ENCODE measurements at regions of chr17 and their contacts with region 1.

Region 1: DNA sequence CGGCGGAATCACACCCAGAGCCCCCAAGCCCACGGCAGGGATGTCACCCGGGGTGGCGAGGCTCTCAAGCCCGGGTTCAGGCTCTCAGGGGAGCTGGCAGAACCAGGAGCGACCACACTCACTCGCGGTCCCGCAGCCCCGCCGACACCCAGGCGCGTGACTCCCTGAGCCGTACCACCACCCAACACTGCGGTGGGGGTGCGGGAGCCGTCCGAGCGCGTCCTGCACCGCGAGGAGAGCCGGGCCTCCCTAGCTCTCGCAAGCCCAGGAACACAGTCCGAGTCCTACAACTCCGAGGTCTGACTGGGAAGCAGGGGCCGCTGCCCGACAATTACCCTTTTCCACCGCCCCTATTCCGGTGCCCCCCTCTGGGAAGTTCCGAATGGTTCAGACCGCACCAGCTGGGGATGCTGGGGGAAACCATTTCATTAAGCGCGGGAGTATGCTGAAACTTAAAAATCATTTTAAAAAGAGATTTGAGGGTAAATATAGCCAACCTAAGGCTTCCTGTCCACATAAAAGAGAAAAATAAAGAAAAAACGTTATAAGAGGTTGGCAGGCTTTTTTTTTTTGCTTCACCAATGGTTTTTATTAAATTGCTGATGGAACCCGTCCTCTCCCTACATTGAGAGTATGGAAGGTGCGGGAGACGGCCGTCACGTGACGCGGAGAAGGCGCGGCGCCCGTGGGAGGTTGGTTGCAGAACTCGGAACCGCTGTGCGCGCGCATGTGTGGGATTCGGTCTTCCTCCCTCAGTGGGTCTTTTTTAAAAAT is at the start of gene FLCN:
- DNase-seq: peak; percentile 84
- H3K4me3 Mint-ChIP-seq: peak within 1 kb of the TSS; percentile 94
- H3K27ac Mint-ChIP-seq: peak within 1 kb of the TSS; percentile 99
- H3K4me1 Mint-ChIP-seq: peaks cover 25% of the 10 kb centered on the region
- H3K27me3 Mint-ChIP-seq: peaks cover 4% of the 10 kb centered on the region
- total RNA-seq, gene FLCN: 35.5 and 36.4 TPM in 2 replicates

Region 2: GRCh38 chr17:17001874-17002520 is 235.2 kb before region 1 on chr17:
- intact Hi-C with region 1: loop called (anchors 1 kb)
- DNase-seq: peak; percentile 66
- H3K4me3 Mint-ChIP-seq: no peak overlapping the region
- H3K27ac Mint-ChIP-seq: no peak overlapping the region
- H3K4me1 Mint-ChIP-seq: no peaks in the 10 kb centered on the region
- H3K27me3 Mint-ChIP-seq: peaks cover 4% of the 10 kb centered on the region

Region 3: GRCh38 chr17:17067257-17067656 is 170.0 kb before region 1 on chr17:
- intact Hi-C with region 1: no loop called
- DNase-seq: no peak
- H3K4me3 Mint-ChIP-seq: no peak overlapping the region
- H3K27ac Mint-ChIP-seq: no peak overlapping the region
- H3K4me1 Mint-ChIP-seq: peaks cover 48% of the 10 kb centered on the region
- H3K27me3 Mint-ChIP-seq: no peaks in the 10 kb centered on the region

Region 4: GRCh38 chr17:17126131-17127110 is 110.8 kb before region 1 on chr17:
- intact Hi-C with region 1: no loop called
- DNase-seq: no peak
- H3K4me3 Mint-ChIP-seq: no peak overlapping the region
- H3K27ac Mint-ChIP-seq: no peak overlapping the region
- H3K4me1 Mint-ChIP-seq: peaks cover 42% of the 10 kb centered on the region
- H3K27me3 Mint-ChIP-seq: no peaks in the 10 kb centered on the region

Region 5: DNA sequence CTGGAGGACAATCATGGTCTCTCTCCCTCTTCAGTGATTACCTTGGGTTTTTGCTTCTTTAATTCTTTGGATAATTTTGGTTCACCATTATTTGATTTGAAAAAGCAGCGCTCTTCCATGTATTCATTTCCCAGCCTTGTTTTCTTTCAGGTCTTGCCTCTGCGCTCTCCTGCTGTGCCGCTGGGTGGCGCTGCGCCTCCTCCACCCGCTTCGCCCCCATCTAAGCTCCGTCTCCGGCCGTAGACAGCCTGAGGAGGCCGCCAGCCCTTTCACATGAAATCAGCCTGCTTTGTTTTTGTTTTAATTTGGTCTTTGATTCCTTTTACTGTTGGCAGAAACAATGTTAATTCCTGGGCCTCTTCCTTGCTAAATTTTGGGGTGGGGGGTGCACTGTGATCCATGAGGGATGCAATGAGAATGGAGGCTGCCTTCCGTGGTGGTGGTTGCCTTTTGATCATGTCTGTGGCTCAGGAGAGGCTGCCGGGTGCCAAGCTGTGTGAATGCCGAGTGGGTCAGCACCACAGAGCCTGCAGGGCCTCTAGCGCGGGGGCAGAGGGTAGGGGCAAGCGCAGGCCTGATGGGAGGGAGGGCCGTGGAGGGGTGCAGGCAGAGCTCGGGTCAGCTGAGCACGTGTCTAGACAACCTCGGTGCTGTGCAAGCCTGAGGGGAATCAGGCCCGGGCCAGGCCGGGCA is 95.2 kb before region 1 on chr17:
- intact Hi-C with region 1: loop called (anchors 2 kb)
- DNase-seq: peak; percentile 30
- H3K4me3 Mint-ChIP-seq: no peak overlapping the region
- H3K27ac Mint-ChIP-seq: peak overlapping the region; percentile 56
- H3K4me1 Mint-ChIP-seq: peaks cover under 1% of the 10 kb centered on the region
- H3K27me3 Mint-ChIP-seq: no peaks in the 10 kb centered on the region

Region 6: DNA sequence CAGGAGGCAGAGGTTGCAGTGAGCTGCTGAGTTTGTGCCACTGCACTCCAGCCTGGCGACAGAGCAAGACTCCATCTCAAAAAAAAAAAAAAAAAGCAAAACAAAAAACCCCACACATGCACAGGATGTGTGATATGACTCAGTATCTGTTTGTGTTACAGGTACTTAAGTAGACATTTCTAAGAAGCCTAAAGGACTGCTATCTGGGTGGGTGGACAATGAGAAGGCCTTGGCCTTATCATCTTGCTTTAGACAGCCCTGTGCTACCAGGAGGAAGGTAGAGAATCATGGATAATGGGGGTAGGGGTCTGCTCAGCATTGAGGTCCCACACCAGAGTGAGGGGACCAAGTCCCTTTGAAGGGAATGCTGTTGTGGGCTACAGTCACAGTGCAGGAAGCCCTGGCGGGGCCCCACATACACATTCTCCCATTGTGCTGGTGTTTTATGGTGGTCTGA is 57.8 kb before region 1 on chr17:
- intact Hi-C with region 1: loop called (anchors 1 kb)
- DNase-seq: peak; percentile 39
- H3K4me3 Mint-ChIP-seq: peak overlapping the region; percentile 84
- H3K27ac Mint-ChIP-seq: peak overlapping the region; percentile 97
- H3K4me1 Mint-ChIP-seq: peaks cover 76% of the 10 kb centered on the region
- H3K27me3 Mint-ChIP-seq: no peaks in the 10 kb centered on the region

Region 7: DNA sequence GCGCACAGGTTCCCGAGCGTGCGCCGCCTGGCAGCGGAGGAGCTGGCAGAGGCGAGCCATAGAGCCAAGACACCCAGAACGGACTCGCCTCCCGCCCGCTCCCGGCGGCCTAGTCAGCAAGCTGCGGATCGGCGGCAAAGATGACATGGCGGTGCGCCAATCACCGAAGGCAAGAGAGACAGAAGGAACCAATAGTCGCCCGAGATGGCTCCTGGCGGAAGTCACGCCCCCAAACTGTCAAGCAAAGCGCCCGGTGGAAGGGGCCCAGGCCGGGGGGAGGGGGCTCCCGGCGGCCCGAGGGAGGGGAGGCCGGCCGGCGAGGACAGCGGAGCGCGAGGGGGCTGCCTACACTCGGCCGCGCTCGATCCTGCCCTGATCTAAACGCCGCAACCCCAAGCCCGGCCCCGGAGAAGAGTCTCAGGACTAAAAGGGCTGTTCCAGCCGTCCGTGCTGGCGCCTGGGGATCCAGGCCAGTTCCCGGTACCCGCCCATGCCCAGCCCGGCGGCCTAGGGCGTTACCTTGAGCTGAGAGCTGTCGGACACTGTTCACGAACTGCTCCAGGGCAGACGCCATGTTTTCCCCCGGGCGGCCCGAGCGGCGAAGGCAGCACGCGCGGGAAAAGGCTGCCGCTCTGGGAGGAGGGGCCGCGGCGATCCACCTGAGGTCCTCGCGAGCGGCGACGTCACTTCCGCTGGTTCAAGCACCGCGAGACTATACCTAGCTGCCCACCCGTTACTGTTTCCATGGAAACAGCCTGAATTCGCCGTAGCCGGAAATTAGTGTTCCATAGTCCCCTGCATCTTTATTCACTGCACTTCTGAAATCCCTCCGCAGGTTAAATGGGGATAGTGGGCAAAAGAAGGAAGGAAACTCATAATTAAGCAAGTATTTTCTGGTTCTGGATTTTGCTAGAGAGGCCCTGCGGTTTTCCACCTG is 43.7 kb after region 1 on chr17 and contains the start of gene COPS3:
- intact Hi-C with region 1: loop called (anchors 1 kb)
- DNase-seq: peak; percentile 95
- H3K4me3 Mint-ChIP-seq: peak within 1 kb of the TSS; percentile 91
- H3K27ac Mint-ChIP-seq: peak within 1 kb of the TSS; percentile 94
- H3K4me1 Mint-ChIP-seq: peaks cover 36% of the 10 kb centered on the region
- H3K27me3 Mint-ChIP-seq: no peaks in the 10 kb centered on the region
- total RNA-seq, gene COPS3: 122 and 131 TPM in 2 replicates

Measured in activated T-helper 1 cell treated with anti-CD3 and anti-CD28 coated beads, Interleukin-12 subunit alpha, Interleukin-12 subunit beta, Interleukin-2, Interleukin-4 antibody, amounts not matched to agents 30 ng/mL and 10 ng/mL and 1 ng/mL, durations not matched to agents 14 hours and 24 hours and 36 hours (primary cell).